Sciatic nerve (tissue), 2 donors: ENCODE measurements at regions of chr12 and their contacts with region 1.

Region 1: DNA sequence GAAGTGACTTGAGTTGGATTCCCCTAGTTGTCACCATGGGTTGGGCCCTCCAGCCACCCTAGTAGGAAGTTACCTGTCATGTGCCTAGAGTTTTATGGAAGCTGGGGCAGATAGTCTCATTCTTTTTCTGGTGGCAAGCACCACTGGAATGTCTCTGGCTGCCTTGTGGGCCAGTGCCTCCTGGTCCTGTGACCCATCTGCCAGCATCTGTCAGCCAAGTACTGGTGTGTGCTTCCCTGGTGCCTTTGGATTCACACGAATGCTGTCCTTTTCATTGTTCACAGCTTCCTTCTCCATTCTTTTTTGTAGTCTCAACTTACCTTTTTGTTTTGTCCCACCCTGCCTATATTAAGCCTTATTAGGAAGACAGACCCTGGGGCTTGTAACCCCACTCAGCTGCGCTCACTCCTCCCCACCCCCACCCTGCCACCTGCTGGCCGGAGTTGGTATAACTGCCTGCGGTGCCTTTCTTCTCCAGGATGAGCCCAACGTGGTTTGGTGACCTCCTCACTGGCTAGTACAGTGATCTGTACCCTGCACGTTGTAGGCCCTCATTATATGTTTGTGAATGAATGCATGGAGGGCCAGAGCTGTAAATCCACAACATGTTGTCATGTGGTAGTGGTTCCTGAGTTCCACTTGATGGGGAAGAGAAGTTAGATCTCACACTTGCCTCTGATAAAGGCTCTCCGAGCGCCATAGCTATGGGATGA is 125.7 kb downstream of the TSPAN9 start:
- DNase-seq: peak; percentile 81
- ATAC-seq: peak; percentile 62

Region 2: GRCh38 chr12:2834581-2835491 is 368.1 kb before region 1 on chr12 and contains the start of gene NRIP2:
- intact Hi-C with region 1: no loop called
- DNase-seq: peak; percentile 75
- ATAC-seq: peak; percentile 85
- total RNA-seq, gene NRIP2: 73.4 TPM

Region 3: GRCh38 chr12:3275171-3276041 is 72.5 kb after region 1 on chr12:
- intact Hi-C with region 1: loop called (anchors 2 kb)
- DNase-seq: peak; percentile 90
- ATAC-seq: peak; percentile 77